ENCODE measurements at regions of chr22 and their contacts with region 1.

Region 1: DNA sequence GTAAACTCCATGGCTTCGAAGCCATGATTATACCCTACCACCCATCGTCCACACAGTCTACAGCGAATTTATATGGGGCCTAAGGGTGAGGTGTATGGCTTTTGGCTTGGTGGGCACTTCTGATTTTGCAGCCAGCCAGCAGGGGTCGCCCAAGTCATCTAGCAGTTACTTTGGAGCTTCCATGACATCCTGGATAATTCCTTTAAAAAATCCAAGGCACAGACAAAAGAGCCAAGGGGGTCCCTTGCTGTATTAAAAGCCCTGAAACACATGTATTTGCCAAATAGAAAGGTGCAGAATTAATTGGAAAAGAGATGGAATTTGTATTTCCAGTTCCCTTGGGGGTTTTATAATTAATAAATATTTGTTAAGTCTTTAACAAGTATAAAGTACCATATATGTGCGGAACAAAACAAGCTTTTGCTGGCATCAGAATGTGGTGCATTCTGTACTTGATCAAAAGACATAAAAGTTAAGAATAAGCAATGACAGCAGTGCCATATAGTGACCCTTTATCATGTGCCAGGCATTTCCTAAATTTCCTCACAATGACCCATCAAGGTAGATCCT is 132.8 kb upstream of the PITPNB start:
- DNase-seq: peak; percentile 77
- H3K4me3 ChIP-seq: no peak overlapping the region
- H3K27ac ChIP-seq: no peak overlapping the region
- H3K4me1 ChIP-seq: peaks cover 31% of the 10 kb centered on the region
- H3K27me3 ChIP-seq: no peaks in the 10 kb centered on the region
- CTCF ChIP-seq: peak; percentile 93

Region 2: GRCh38 chr22:27937453-27937852 is 114.4 kb before region 1 on chr22:
- intact Hi-C with region 1: no loop called
- DNase-seq: no peak
- H3K4me3 ChIP-seq: no peak overlapping the region
- H3K27ac ChIP-seq: no peak overlapping the region
- H3K4me1 ChIP-seq: peaks cover 8% of the 10 kb centered on the region
- H3K27me3 ChIP-seq: no peaks in the 10 kb centered on the region
- CTCF ChIP-seq: no peak

Region 3: GRCh38 chr22:28009272-28009827 is 42.5 kb before region 1 on chr22:
- intact Hi-C with region 1: no loop called
- DNase-seq: peak; percentile 69
- H3K4me3 ChIP-seq: no peak overlapping the region
- H3K27ac ChIP-seq: no peak overlapping the region
- H3K4me1 ChIP-seq: peaks cover 31% of the 10 kb centered on the region
- H3K27me3 ChIP-seq: no peaks in the 10 kb centered on the region
- CTCF ChIP-seq: peak; percentile 99

Region 4: GRCh38 chr22:28034760-28035401 is 17.0 kb before region 1 on chr22:
- intact Hi-C with region 1: no loop called
- DNase-seq: peak; percentile 84
- H3K4me3 ChIP-seq: peak overlapping the region; percentile 13
- H3K27ac ChIP-seq: peak overlapping the region; percentile 89
- H3K4me1 ChIP-seq: peaks cover 43% of the 10 kb centered on the region
- H3K27me3 ChIP-seq: no peaks in the 10 kb centered on the region
- CTCF ChIP-seq: no peak

Region 5: GRCh38 chr22:28442264-28442710 is 390.4 kb after region 1 on chr22:
- intact Hi-C with region 1: loop called (anchors 10 kb)
- DNase-seq: peak; percentile 81
- H3K4me3 ChIP-seq: peak overlapping the region; percentile 81
- H3K27ac ChIP-seq: peak overlapping the region; percentile 91
- H3K4me1 ChIP-seq: peaks cover 68% of the 10 kb centered on the region
- H3K27me3 ChIP-seq: no peaks in the 10 kb centered on the region
- CTCF ChIP-seq: peak; percentile 85

Region 6: GRCh38 chr22:28594797-28595462 is 543.1 kb after region 1 on chr22:
- intact Hi-C with region 1: loop called (anchors 2 kb)
- DNase-seq: no peak
- H3K4me3 ChIP-seq: no peak overlapping the region
- H3K27ac ChIP-seq: no peak overlapping the region
- H3K4me1 ChIP-seq: peaks cover 10% of the 10 kb centered on the region
- H3K27me3 ChIP-seq: no peaks in the 10 kb centered on the region
- CTCF ChIP-seq: peak; percentile 82

Measured in left ventricle myocardium inferior (tissue), 1 donor.